Activated naive CD4-positive, alpha-beta T cell treated with anti-CD3 and anti-CD28 coated beads for 36 hours (primary cell): ENCODE measurements at regions of chr9 and their contacts with region 1.

Region 1: GRCh38 chr9:133658442-133659431 is 22.6 kb downstream of the DBH start:
- DNase-seq: peak; percentile 60
- H3K4me3 Mint-ChIP-seq: peak overlapping the region; percentile 45
- H3K27ac Mint-ChIP-seq: no peak overlapping the region
- H3K4me1 Mint-ChIP-seq: peaks cover 41% of the 10 kb centered on the region
- H3K27me3 Mint-ChIP-seq: peaks cover 18% of the 10 kb centered on the region

Region 2: DNA sequence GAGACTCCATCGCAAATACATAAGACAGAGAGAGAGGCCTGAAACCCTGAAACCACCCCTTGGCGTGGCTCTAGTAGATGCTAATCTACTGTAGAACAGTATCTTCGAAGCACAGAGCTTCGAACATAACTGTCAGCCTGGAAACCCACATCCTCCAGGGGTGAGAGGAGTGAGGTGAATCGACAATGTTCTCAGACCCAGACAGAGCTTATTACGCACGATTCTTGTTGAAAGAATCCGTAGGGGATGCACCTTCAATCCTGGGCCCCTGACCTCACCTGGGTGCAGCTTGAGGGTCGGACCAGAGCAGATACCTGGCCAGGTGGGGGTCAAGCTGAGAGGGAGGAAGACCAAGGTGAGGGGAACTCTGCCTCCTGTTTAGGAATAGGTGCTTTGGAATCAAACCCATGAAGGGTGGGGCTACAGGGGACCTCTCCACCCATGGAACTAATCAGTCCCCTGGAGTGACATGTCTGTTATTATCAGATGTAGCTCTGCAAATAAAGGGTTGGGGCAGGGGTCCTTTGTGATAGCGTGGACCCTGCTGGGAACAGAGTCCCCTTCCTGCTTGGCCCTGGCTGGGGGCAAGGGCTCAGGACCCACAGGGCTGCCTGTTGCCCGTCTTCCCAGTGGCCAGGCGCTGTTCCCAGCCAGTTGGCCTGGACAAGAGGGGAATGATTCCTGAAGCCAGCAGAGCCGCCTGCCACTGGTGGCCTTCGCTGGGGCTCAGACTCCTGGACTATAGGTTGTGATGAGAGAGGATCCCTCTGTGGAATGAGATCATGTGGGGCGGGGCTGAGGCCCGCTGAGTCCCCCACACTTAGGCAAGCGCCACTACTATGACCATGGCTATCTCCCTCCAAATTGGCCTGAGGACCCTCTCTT is 18.6 kb after region 1 on chr9:
- CTCF ChIA-PET with region 1: no interaction called
- intact Hi-C with region 1: loop called (anchors 2 kb)
- DNase-seq: peak; percentile 85
- H3K4me3 Mint-ChIP-seq: no peak overlapping the region
- H3K27ac Mint-ChIP-seq: peak overlapping the region; percentile 70
- H3K4me1 Mint-ChIP-seq: peaks cover 44% of the 10 kb centered on the region
- H3K27me3 Mint-ChIP-seq: no peaks in the 10 kb centered on the region

Region 3: DNA sequence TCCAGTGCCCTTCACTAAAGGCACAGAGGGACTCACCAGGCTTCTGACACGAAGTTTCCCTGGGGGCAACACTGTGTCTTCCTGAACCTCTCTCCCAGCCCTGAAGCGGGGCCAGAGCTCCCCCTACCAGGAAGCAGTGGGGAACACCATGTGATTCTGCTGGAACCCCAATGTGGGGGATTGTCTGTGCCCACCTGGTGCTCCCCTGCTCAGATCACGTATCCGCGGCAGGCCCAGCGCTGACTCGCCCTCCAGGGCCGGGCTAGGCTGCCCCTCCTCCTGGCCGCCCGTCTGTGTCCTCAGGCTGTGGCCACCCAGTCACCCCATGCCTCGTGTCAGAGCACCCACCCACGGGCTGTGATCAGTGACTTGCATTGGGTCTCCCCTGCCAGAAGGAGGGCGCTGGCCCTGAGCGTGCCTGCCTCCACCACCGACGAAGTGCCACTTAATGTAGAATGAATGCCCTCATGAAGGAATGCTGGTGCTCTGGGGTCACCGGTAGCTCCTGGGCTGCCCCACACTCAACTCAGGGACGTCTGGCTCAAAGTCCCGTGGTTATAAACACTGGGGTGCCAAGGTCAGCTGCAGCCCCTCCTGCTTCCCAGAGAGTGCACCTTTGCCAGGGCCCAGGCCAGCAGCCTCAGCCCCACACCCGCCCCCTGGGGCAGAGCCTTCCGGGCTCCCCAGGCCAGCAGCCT is 57.3 kb after region 1 on chr9:
- CTCF ChIA-PET with region 1: no interaction called
- intact Hi-C with region 1: loop called (anchors 1 kb)
- DNase-seq: peak; percentile 54
- H3K4me3 Mint-ChIP-seq: no peak overlapping the region
- H3K27ac Mint-ChIP-seq: no peak overlapping the region
- H3K4me1 Mint-ChIP-seq: peaks cover 6% of the 10 kb centered on the region
- H3K27me3 Mint-ChIP-seq: peaks cover 1% of the 10 kb centered on the region

Region 4: GRCh38 chr9:133768859-133769425 is 110.2 kb after region 1 on chr9:
- CTCF ChIA-PET with region 1: no interaction called
- intact Hi-C with region 1: no loop called
- DNase-seq: peak; percentile 7
- H3K4me3 Mint-ChIP-seq: no peak overlapping the region
- H3K27ac Mint-ChIP-seq: no peak overlapping the region
- H3K4me1 Mint-ChIP-seq: no peaks in the 10 kb centered on the region
- H3K27me3 Mint-ChIP-seq: no peaks in the 10 kb centered on the region